ENCODE measurements at regions of chr2 and their contacts with region 1.

Region 1: GRCh38 chr2:74507145-74507925 is at the start of gene PCGF1:
- DNase-seq: peak; percentile 99
- ATAC-seq: peak; percentile 85
- H3K4me3 Mint-ChIP-seq: peak within 1 kb of the TSS; percentile 96
- H3K27ac Mint-ChIP-seq: peak within 1 kb of the TSS; percentile 100
- H3K4me1 Mint-ChIP-seq: peaks cover 52% of the 10 kb centered on the region
- H3K27me3 Mint-ChIP-seq: peaks cover 24% of the 10 kb centered on the region
- CTCF ChIP-seq: no peak
- total RNA-seq, gene PCGF1: 29.3 and 34.7 TPM in 2 replicates

Region 2: GRCh38 chr2:74198461-74199274 is 308.7 kb before region 1 on chr2 and contains the start of gene MTHFD2:
- CTCF ChIA-PET with region 1: no interaction called
- POLR2A ChIA-PET with region 1: no interaction called
- intact Hi-C with region 1: loop called (anchors 1 kb)
- DNase-seq: peak; percentile 87
- ATAC-seq: peak; percentile 87
- H3K4me3 Mint-ChIP-seq: peak within 1 kb of the TSS; percentile 99
- H3K27ac Mint-ChIP-seq: peak within 1 kb of the TSS; percentile 100
- H3K4me1 Mint-ChIP-seq: peaks cover 34% of the 10 kb centered on the region
- H3K27me3 Mint-ChIP-seq: no peaks in the 10 kb centered on the region
- CTCF ChIP-seq: peak; percentile 50
- total RNA-seq, gene MTHFD2: 135 and 150 TPM in 2 replicates

Region 3: DNA sequence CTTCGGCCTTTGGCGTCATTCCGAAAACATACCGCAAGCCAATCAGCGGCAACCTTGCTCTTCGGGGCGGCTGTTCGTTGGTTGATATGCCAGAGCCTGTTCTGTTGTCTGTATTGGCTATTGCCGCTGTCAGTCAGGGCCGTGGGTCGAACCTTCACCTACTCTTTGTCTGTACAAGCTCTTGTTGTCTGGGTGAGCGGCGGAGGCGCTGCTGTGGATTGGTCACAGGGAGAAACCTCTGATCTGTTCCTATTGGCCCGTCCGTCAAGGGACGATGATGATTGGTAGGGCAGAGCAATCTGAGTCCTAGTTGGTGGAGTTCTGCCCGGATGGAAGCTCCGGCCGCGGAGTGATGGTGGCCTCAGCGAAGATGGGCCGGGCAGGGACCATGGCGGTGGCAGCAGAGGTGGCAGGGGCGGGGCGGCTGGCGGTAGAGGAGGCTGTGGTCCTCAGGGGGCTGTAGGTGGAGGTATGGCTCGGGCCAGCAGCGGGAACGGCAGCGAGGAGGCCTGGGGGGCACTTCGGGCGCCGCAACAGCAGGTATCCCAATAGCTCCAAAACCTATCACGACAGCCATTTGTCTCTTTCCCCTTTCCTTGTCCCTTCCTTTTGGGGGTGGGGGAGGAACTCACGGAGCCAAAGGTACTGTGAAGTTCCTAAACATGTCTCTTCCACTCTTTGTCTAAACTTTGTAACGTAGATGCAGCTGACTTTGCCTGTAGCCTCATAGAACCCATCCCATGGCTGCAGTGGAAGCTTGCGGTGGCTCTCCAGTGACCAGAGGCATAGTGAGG is 49.0 kb before region 1 on chr2 and contains the start of gene WBP1:
- CTCF ChIA-PET with region 1: no interaction called
- POLR2A ChIA-PET with region 1: interaction called, 8 read pairs
- intact Hi-C with region 1: loop called (anchors 1 kb)
- DNase-seq: peak; percentile 87
- ATAC-seq: peak; percentile 81
- H3K4me3 Mint-ChIP-seq: peak within 1 kb of the TSS; percentile 99
- H3K27ac Mint-ChIP-seq: peak within 1 kb of the TSS; percentile 100
- H3K4me1 Mint-ChIP-seq: peaks cover 62% of the 10 kb centered on the region
- H3K27me3 Mint-ChIP-seq: no peaks in the 10 kb centered on the region
- CTCF ChIP-seq: no peak
- total RNA-seq, gene WBP1: 61.4 and 65.3 TPM in 2 replicates

Region 4: DNA sequence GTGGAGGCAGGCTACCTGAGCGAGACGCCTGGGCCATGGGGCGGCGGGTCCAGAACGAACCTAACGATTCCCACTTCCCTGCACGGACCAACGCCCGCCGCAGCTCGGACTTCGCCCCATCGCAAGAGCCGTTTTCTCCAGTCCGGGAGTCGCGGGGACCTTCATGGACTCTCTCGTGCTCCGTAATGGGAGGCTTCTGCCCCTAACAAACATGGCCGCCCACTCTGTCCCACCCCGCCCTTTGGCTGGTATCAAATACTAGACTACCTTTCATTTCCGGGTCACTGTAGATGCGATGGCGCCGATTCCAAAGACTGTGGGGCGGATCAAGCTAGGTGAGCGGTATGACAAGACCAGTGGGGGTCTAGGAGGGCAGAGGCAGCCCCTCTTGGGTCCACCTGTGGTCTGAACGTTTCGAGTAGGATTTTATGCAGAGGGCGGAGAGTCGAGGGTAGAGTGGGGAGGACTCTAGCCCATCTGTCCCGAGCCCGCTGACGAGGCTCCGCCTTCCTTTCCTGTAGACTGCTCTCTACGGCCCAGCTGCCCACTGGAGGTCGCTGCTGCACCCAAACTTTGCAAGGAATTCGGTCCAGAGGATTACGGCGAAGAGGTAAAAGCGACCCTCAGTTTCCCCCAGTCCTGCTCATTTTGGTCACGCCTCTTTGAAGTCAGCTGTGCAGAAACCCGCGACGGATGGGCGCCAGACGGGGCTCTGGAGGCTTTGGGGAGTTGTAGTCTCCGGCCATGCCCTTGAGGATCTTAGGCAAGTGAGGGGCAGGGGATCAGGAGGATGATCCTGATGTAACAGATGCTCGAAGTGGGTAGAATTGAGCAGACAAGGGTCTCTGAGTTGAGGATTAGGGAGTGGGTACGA is 24.3 kb before region 1 on chr2 and contains the starts of genes CCDC142 and TTC31:
- CTCF ChIA-PET with region 1: interaction called, 17 read pairs
- POLR2A ChIA-PET with region 1: interaction called, 20 read pairs
- intact Hi-C with region 1: loop called (anchors 1 kb)
- DNase-seq: peak; percentile 83
- ATAC-seq: peak; percentile 92
- H3K4me3 Mint-ChIP-seq: peak within 1 kb of the TSS; percentile 100
- H3K27ac Mint-ChIP-seq: peak within 1 kb of the TSS; percentile 100
- H3K4me1 Mint-ChIP-seq: peaks cover 30% of the 10 kb centered on the region
- H3K27me3 Mint-ChIP-seq: no peaks in the 10 kb centered on the region
- CTCF ChIP-seq: peak; percentile 23
- total RNA-seq, gene CCDC142: 29.3 and 40.4 TPM in 2 replicates
- total RNA-seq, gene TTC31: 41.9 and 49.1 TPM in 2 replicates

Region 5: DNA sequence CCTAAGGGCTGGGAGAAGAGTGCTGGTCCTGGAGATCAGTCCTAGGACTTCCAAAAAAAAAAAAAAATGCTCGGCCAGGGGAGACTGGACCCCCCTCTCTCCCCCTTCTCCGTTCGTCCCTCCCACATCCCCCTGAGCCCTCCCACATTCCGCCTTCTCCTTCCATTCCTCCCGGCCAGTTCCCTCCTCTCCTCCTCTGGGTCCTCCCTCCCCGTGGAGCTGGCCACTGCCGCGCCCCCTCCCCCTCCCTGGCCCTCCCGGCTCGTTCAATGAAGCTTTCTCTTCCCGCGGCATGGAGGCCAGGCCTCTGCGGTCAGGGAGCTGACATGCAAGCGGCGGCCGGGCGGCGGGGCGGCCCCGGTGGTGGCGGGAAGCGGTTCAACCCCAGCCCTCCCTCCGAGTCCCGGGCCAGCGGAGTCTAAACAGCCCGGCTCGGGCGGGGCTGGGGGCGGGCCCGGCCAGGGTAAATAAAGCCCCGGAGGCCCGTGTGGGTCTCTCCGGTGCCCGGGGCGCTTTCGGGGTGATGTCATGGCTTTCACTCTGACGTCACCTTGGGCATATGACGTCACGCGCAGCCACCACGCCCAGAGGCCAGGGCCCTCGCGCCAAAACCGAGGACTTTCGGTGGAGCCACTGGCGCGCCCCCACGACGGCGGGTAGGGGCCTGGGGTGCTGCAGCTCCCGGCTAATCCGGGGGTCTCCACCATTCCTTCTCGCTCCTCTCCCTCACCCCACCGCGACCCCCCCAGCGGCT is 46.7 kb after region 1 on chr2 and contains the start of gene LOXL3:
- CTCF ChIA-PET with region 1: interaction called, 3 read pairs
- POLR2A ChIA-PET with region 1: interaction called, 4 read pairs
- intact Hi-C with region 1: loop called (anchors 1 kb)
- DNase-seq: peak; percentile 83
- ATAC-seq: peak; percentile 51
- H3K4me3 Mint-ChIP-seq: peak within 1 kb of the TSS; percentile 97
- H3K27ac Mint-ChIP-seq: peak within 1 kb of the TSS; percentile 90
- H3K4me1 Mint-ChIP-seq: peaks cover 32% of the 10 kb centered on the region
- H3K27me3 Mint-ChIP-seq: peaks cover 7% of the 10 kb centered on the region
- CTCF ChIP-seq: no peak
- total RNA-seq, gene LOXL3: 1.4 and 2.3 TPM in 2 replicates

Region 6: DNA sequence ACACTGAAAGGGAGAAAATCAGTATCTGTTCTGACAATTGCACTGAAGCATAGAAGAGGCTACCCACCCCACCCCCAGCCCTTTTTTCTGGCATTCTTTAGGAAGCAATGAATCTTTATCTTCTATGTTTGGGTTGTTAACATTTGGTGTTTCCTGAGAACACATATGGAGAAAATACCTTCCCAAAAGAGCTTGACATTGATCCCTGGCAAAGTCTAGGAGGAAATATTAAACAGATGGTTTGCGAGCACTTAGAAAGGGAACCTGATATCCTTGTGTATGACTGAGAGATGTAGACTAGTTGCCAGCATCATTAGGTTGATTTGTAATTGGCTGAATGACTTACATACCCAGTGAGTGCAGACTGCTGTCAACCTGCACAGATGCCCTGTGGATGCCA is 90.1 kb after region 1 on chr2:
- CTCF ChIA-PET with region 1: no interaction called
- POLR2A ChIA-PET with region 1: interaction called, 16 read pairs
- intact Hi-C with region 1: no loop called
- DNase-seq: no peak
- ATAC-seq: no peak
- H3K4me3 Mint-ChIP-seq: no peak overlapping the region
- H3K27ac Mint-ChIP-seq: no peak overlapping the region
- H3K4me1 Mint-ChIP-seq: peaks cover 5% of the 10 kb centered on the region
- H3K27me3 Mint-ChIP-seq: peaks cover 24% of the 10 kb centered on the region
- CTCF ChIP-seq: no peak

Region 7: GRCh38 chr2:74833418-74834233 is 326.3 kb after region 1 on chr2 and contains the start of gene HK2:
- CTCF ChIA-PET with region 1: no interaction called
- POLR2A ChIA-PET with region 1: no interaction called
- intact Hi-C with region 1: loop called (anchors 10 kb)
- DNase-seq: peak; percentile 80
- ATAC-seq: peak; percentile 82
- H3K4me3 Mint-ChIP-seq: peak within 1 kb of the TSS; percentile 95
- H3K27ac Mint-ChIP-seq: peak within 1 kb of the TSS; percentile 90
- H3K4me1 Mint-ChIP-seq: peaks cover 32% of the 10 kb centered on the region
- H3K27me3 Mint-ChIP-seq: no peaks in the 10 kb centered on the region
- CTCF ChIP-seq: no peak
- total RNA-seq, gene HK2: 14.5 and 15.3 TPM in 2 replicates